Endothelial cell of umbilical vein (primary cell): ENCODE measurements at regions of chr6 and their contacts with region 1.

Region 1: GRCh38 chr6:10434692-10435376 is 20.0 kb upstream of the TFAP2A start:
- DNase-seq: no peak
- H3K4me3 ChIP-seq: no peak overlapping the region
- H3K27ac ChIP-seq: no peak overlapping the region
- H3K4me1 ChIP-seq: no peaks in the 10 kb centered on the region
- H3K27me3 ChIP-seq: peaks cover 0 to 2% of the 10 kb centered on the region in 2 experiments
- CTCF ChIP-seq: peak; percentile 43 to 44
- POLR2A ChIP-seq: no peak

Region 2: GRCh38 chr6:8499540-8499939 is 1935.3 kb before region 1 on chr6:
- CTCF ChIA-PET with region 1: interaction called, 15 read pairs
- POLR2A ChIA-PET with region 1: no interaction called
- dilution Hi-C with region 1: no loop called
- intact Hi-C with region 1: no loop called
- DNase-seq: no peak
- H3K4me3 ChIP-seq: no peak overlapping the region
- H3K27ac ChIP-seq: no peak overlapping the region
- H3K4me1 ChIP-seq: no peaks in the 10 kb centered on the region
- H3K27me3 ChIP-seq: no peaks in the 10 kb centered on the region
- CTCF ChIP-seq: peak in 1 of 2 donors; percentile 5
- POLR2A ChIP-seq: no peak

Region 3: GRCh38 chr6:8539446-8539845 is 1895.4 kb before region 1 on chr6:
- CTCF ChIA-PET with region 1: interaction called, 6 read pairs
- POLR2A ChIA-PET with region 1: no interaction called
- dilution Hi-C with region 1: no loop called
- intact Hi-C with region 1: loop called (anchors 1 kb)
- DNase-seq: no peak
- H3K4me3 ChIP-seq: no peak overlapping the region
- H3K27ac ChIP-seq: no peak overlapping the region
- H3K4me1 ChIP-seq: no peaks in the 10 kb centered on the region
- H3K27me3 ChIP-seq: no peaks in the 10 kb centered on the region
- CTCF ChIP-seq: peak in 1 of 2 donors; percentile 5
- POLR2A ChIP-seq: no peak

Region 4: GRCh38 chr6:10316327-10316726 is 118.5 kb before region 1 on chr6:
- CTCF ChIA-PET with region 1: no interaction called
- POLR2A ChIA-PET with region 1: no interaction called
- dilution Hi-C with region 1: no loop called
- intact Hi-C with region 1: no loop called
- DNase-seq: no peak
- H3K4me3 ChIP-seq: no peak overlapping the region
- H3K27ac ChIP-seq: no peak overlapping the region
- H3K4me1 ChIP-seq: no peaks in the 10 kb centered on the region
- H3K27me3 ChIP-seq: no peaks in the 10 kb centered on the region
- CTCF ChIP-seq: no peak
- POLR2A ChIP-seq: no peak

Region 5: DNA sequence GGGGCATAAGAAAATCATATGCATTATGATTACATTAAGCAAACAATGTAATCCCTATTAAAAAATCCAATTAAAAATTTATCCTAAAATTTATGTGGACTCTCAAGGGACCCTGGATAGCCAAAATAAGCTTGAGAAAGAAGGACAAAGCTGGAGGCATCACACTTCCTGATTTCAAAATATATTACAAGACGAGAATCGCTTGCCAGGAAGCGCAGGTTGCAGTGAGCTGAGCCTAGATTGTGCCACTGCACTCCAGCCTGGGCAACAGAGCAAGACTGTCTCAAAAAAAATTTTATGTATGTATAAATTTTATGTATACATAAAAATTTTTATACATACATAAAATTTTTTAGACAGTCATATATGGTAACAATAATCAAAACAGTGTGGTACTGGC is 37.8 kb after region 1 on chr6:
- CTCF ChIA-PET with region 1: no interaction called
- POLR2A ChIA-PET with region 1: no interaction called
- dilution Hi-C with region 1: no loop called
- intact Hi-C with region 1: no loop called
- DNase-seq: no peak
- H3K4me3 ChIP-seq: no peak overlapping the region
- H3K27ac ChIP-seq: no peak overlapping the region
- H3K4me1 ChIP-seq: no peaks in the 10 kb centered on the region
- H3K27me3 ChIP-seq: no peaks in the 10 kb centered on the region
- CTCF ChIP-seq: no peak
- POLR2A ChIP-seq: no peak